Heart right ventricle (tissue), 16 donors: ENCODE measurements at regions of chr7 and their contacts with region 1.

Region 1: DNA sequence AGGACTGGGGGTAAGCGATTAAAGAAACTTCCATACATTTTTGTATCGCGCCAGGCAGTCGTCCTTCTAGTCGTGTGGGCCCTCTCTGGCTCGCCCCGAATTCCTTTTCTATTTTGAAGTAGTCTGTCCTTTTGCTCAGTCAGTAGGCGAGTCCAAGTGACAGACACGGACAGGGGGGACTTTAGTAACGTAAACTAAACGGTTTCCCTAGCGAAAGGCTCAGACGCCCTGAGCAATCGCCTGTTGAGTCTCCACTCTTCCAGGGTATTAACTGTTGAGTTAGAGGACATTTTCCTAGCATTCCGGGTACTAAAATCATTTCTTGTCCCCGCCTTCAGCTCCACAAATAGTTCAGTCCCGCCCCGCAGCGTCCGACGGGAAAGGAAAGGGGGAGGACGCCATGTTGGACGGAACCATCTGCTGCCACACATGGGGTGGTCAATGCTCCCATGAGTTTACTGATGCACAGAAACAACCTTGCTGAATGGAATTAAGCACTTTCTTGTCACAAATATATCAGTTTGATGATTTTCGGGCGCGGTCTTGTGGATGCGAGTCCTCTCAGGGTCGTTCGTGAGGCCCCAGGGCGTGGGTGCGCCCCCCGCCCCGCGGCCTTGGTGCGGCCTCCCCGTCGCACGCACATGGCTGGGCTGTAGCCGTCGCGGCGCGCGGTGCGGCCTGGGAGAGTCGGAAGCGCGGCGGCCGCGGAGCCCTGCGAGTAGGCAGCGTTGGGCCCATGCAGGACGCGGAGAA is at the start of gene EIF3B:
- DNase-seq: peak; percentile 88 to 93
- ATAC-seq: peak; percentile 93 to 97 (median 96)
- H3K4me3 ChIP-seq: peak within 1 kb of the TSS; percentile 88 to 100 (median 98)
- H3K27ac ChIP-seq: peak within 1 kb of the TSS; percentile 97 to 100 (median 99)
- H3K4me1 ChIP-seq: peaks cover 6 to 51% (median 45%) of the 10 kb centered on the region in 9 donors
- H3K27me3 ChIP-seq: no peaks in the 10 kb centered on the region
- CTCF ChIP-seq: no peak
- total RNA-seq, gene EIF3B: 64.0 to 102 (median 68.2) TPM

Region 2: DNA sequence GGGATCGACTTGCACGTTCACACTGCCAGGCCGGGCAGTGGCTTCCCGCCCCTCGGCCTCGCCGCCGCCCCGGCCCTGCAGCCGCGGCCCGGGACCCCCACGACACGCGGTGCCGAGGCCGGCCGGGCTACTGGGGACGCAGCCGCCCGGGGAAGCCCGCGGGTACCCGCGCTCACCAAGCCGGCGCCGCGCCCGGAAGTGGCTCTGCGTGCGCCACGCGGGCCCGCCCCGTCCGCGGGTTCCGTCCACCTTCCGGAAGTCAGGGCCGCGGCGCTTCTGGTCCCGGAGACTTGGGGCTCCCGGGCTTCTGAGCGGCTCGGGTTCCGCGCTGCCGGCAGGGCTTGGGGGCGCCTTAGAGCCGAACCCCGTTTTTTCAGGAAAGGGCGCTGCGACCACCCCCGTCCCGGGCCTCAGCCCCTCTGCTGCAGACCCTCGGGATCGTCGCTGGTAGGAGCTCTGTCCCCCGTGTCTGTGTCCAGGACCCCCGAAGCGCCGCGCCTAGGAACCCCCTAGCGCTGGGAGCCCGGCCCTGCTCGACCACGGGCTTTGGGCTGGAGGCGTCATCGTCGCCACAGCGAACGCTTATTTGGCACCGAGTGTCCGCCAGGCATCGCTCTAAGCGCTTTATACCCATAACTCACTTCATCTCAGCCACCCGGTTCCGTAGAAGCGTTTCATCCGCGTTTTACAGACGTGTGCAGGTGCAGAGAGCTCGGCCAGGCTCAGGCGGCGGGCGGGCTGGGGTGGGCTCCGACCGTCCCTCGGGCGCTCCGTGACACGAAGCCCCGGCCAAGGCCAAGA is 784.3 kb before region 1 on chr7 and contains the start of gene PSMG3:
- intact Hi-C with region 1: loop called in 3 of 10 experiments (anchors 5 to 10 kb)
- DNase-seq: peak; percentile 91 to 92
- ATAC-seq: peak; percentile 95 to 99 (median 97)
- H3K4me3 ChIP-seq: peak within 1 kb of the TSS; percentile 76 to 100 (median 89)
- H3K27ac ChIP-seq: peak within 1 kb of the TSS; percentile 81 to 97 (median 95)
- H3K4me1 ChIP-seq: peaks cover 5 to 41% (median 26%) of the 10 kb centered on the region in 9 donors
- H3K27me3 ChIP-seq: no peaks in the 10 kb centered on the region
- CTCF ChIP-seq: peak in 7 of 9 donors; percentile 4 to 58 (median 39)
- total RNA-seq, gene PSMG3: 7.3 to 14.1 (median 11.1) TPM

Region 3: DNA sequence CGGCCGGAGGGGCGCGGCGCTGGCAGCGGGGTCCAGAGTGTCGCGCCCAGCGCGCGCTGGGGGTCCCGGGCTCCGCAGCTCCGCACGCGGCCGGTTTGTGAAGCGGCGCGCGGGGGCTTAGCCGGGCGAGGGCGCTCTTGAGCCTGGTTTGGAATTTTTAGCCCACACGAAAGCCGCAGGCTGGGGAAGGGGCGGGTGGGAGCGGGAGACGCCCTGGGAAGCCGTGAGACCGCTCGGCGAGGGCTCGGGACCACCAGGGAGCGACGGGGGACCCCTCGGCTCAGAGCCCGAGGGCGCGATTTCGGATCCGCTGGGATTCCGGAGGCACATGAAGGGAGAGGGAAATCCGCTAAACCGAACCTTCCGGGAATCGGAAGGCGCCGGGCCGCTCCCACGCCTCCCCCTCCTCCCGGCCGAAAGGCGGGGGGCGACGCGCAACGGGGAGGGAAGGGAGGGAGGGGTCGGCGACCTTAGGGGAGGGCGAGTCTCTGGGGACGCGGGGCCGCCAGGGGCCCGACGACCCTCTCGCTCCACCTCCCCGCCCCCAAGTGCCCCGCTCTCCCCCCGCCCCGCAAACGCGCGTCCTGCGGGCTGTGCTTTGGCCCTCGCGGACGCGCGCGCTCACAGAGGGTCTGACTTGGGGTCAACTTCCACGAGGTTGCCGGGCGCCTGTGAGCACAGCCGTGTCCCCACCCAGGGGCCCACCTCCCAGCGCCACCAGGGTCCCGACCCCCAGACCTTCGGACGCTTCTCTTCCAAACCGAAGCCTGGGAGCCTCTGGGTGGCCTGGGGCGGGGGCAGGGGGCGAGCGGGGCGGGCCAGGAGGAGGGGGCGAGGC is 689.4 kb before region 1 on chr7:
- intact Hi-C with region 1: loop called in 1 of 10 experiments (anchors 10 kb)
- DNase-seq: peak; percentile 70 to 71
- ATAC-seq: peak; percentile 28 to 60 (median 50)
- H3K4me3 ChIP-seq: peak overlapping the region; percentile 57 to 75 (median 72)
- H3K27ac ChIP-seq: peak overlapping the region; percentile 58 to 92 (median 82)
- H3K4me1 ChIP-seq: peaks cover 18 to 55% (median 46%) of the 10 kb centered on the region in 9 donors
- H3K27me3 ChIP-seq: peaks cover 7 to 84% (median 21%) of the 10 kb centered on the region in 7 donors
- CTCF ChIP-seq: peak; percentile 37 to 88 (median 72)

Region 4: DNA sequence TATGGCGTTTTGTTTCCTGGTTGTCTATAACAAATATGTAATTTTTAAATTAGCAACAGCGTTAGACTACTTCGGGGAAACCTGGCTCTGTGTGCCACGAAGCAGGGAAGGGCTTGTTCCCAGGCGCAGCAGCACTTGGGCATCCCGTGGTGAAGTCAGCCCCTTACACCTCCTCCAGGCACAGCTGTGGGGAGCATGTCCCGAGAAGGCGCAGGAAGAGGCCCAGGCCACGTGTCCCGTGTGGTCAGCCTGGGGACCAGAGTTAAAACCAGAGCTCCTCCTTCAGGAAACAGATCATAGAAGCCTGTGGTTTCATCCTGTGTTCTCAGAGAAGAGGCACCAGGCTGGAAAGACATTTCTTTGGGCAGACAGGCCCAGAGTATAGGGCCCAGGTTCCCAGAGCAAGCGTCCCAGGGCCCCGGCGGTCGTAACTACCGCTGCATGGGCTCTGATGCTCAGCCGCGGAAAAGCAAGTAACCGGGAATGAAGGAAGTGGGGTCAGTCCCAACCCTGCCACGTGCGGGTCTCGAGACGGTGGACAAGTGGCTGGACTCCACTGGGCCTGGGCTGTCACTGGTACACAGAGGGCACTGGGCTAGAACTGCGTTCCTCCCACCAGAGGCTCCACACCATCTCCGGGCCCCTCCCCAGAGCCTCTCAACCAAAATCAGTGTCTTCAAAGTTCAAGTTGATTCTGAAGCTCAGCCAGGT is 105.2 kb before region 1 on chr7:
- intact Hi-C with region 1: loop called (anchors 5 to 10 kb)
- DNase-seq: peak; percentile 54 to 64
- ATAC-seq: peak; percentile 51 to 90 (median 80)
- H3K4me3 ChIP-seq: peak overlapping the region in 2 of 10 donors; percentile 13 to 17
- H3K27ac ChIP-seq: peak overlapping the region in 8 of 10 donors; percentile 25 to 81 (median 57)
- H3K4me1 ChIP-seq: peaks cover 0 to 38% (median 10%) of the 10 kb centered on the region in 9 donors
- H3K27me3 ChIP-seq: no peaks in the 10 kb centered on the region
- CTCF ChIP-seq: peak in 4 of 9 donors; percentile 18 to 38 (median 30)

Region 5: DNA sequence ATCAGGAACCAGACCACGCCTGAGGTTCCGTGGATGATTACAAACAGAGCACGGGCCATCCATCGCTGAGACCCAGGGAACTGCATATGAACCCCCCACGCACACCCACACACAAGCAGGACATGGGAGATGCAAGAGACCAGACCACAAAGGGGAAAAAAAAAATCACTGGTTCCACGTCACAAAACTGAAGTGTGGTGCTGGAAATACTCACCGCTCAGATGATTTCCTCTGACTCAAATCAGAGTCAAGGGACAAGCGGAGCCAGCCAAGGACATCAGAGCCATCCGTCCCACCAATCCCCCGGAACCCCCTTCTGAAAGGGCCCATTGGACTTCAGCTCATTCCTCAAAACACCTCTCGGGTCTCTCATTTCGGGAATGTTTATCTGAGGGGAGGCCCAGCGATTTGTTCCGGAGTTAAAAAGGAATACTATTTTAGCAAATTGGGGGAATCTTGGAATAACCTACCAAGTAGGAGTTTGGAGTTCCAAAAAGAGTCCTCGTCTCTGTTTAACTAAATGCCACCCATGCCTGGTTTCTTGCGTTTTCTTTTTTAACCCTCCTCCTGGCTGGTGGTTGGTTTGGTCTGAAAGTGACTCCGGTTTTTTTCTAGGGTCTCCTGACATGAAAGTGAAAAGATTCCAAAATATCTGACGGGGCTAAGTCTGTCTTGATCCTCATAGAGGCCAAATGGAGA is 55.1 kb before region 1 on chr7:
- intact Hi-C with region 1: no loop called
- DNase-seq: peak in 1 of 2 donors; percentile 54
- ATAC-seq: peak; percentile 22 to 92 (median 81)
- H3K4me3 ChIP-seq: no peak overlapping the region
- H3K27ac ChIP-seq: peak overlapping the region in 8 of 10 donors; percentile 16 to 66 (median 49)
- H3K4me1 ChIP-seq: peaks cover 0 to 28% (median 7%) of the 10 kb centered on the region in 9 donors
- H3K27me3 ChIP-seq: no peaks in the 10 kb centered on the region
- CTCF ChIP-seq: no peak

Region 6: DNA sequence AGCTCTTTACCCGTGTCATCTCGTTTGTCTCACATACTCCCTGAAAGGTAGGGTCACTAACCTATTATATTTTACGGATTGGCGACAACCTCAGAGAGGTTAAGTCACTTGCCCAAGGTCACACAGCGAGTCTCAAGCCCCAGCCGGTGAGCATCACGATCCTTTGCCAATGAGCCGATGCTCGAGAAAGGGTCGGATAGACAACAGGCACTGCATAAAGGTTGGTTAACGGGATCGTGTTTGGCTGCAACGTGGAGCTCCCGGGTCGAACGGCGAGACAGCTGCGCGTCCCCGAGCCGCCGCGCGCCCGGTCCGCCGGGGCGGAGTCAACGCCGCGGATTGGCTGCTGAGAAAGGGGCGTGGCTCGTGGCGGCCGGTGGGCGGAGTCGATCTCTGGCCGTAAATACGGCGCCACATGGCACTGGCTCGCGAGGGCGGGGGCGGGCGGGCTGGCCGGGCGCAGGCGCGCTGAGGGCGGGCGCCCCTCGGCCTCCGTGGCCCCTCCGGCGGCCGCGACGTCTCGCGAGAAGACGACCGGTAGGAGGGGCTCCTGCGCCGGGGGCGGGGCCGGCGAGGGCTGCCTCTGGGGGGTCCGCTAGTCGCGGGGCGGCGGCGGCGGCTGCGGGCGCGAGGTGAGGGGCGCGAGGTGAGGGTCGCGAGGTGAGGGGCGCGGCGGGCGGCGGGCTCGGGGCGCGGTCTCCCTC is 48.8 kb after region 1 on chr7 and contains the start of gene CHST12:
- intact Hi-C with region 1: loop called in 1 of 10 experiments (anchors 5 kb)
- DNase-seq: peak; percentile 94 to 96
- ATAC-seq: peak; percentile 86 to 92 (median 89)
- H3K4me3 ChIP-seq: peak within 1 kb of the TSS; percentile 87 to 100 (median 96)
- H3K27ac ChIP-seq: peak within 1 kb of the TSS; percentile 52 to 91 (median 88)
- H3K4me1 ChIP-seq: peaks cover 6 to 76% (median 58%) of the 10 kb centered on the region in 9 donors
- H3K27me3 ChIP-seq: no peaks in the 10 kb centered on the region
- CTCF ChIP-seq: no peak
- total RNA-seq, gene CHST12: 12.4 to 17.2 (median 14.0) TPM

Region 7: GRCh38 chr7:2431260-2431867 is 77.0 kb after region 1 on chr7:
- intact Hi-C with region 1: no loop called
- DNase-seq: no peak
- ATAC-seq: no peak
- H3K4me3 ChIP-seq: no peak overlapping the region
- H3K27ac ChIP-seq: no peak overlapping the region
- H3K4me1 ChIP-seq: peaks cover 0 to 7% (median 0%) of the 10 kb centered on the region in 9 donors
- H3K27me3 ChIP-seq: no peaks in the 10 kb centered on the region
- CTCF ChIP-seq: peak in 6 of 9 donors; percentile 11 to 62 (median 26)